ENCODE measurements at regions of chr11 and their contacts with region 1.

Region 1: DNA sequence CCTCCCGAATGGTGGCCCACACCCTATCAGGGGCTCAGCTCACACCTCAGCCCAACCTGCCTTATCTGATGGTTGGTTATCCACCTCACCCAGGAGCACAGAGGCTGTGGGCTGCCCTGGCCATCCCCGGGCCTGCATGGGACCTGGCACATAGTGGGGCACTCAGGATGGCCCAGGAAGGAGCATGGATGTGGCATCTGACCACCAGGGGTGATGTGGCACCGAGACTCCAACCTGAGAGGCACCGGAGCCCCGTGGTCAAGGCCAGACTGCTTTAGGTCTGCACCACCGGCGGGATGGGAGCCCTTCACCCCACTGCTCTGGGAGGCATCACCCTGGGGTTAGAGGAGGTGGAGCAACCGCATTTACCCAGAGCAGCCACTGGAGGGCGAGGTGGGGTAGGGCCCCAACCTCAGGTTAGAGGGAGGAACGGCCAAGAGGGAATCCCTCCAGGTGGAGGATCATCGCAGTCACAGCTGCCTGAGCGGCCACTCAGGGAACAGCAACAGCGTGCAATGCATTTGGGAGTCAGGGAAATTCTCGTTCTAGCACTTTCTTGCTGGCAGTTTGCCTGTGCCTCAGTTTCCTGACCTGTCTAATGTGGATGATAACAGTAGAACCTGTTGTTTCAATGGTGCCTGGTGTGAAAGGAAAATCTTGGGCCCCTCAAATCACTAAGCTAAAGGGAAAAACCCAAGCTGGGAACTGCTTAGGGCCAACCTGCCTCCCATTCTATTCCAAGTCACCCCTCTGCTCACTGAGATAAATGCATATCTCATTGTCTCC is 52.9 kb upstream of the CARS1 start:
- DNase-seq: peak in 1 of 2 donors; percentile 85
- H3K4me3 ChIP-seq: no peak overlapping the region
- CTCF ChIP-seq: no peak
- POLR2A ChIP-seq: no peak

Region 2: DNA sequence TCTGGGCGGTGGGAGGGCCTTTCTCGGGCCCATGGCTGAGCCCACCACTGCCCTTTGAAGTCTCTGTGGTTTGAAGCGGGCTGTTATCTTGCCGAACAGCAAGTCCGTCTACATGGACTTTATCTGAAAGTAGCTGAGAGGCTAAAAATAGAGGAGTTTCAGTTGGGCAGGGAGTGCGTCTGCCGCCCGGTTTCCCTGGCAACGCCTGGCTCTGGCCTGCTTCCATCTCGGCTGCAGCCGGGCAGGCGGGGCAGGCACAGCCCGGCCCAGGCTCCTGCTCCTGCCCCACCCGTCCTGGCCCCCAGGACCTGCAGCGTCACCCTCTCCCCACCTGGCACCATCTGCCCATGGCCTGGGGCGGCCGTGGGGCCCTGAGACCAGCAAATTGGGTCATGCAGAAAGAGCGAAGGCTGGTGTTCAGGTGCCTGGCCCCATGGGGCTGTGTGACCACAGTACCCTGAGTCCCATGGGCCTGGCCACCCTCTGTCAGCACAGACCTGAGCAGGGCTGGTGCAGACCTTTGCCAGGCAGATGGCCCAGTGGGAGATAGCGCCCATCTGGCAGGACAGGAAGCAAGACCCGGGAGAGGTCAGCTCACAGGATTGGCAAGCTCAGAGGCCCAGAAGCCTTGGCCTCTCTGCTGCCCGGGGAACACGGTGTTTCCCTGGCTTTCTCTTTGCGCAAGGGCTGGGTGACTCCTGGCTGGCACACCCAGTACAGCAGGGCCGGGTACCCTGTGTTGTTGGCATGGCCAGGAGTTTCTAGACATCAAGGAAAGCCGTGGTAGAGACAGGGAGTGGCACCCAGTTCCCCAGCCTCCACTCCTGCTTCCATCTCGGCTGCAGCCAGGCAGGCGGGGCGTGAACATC is 331.2 kb before region 1 on chr11:
- intact Hi-C with region 1: no loop called
- DNase-seq: peak; percentile 65 to 92
- H3K4me3 ChIP-seq: no peak overlapping the region
- CTCF ChIP-seq: no peak
- POLR2A ChIP-seq: no peak

Region 3: GRCh38 chr11:2885676-2886081 is 224.4 kb before region 1 on chr11 and contains the start of gene CDKN1C:
- intact Hi-C with region 1: no loop called
- DNase-seq: peak; percentile 82 to 98
- H3K4me3 ChIP-seq: peak within 1 kb of the TSS; percentile 59
- CTCF ChIP-seq: no peak
- POLR2A ChIP-seq: no peak
- total RNA-seq, gene CDKN1C: 27.1 to 52.7 (median 31.4) TPM

Region 4: GRCh38 chr11:3217676-3218482 is 107.8 kb after region 1 on chr11:
- intact Hi-C with region 1: loop called (anchors 10 kb)
- DNase-seq: peak in 1 of 2 donors; percentile 78
- H3K4me3 ChIP-seq: no peak overlapping the region
- CTCF ChIP-seq: no peak
- POLR2A ChIP-seq: no peak